ENCODE measurements at regions of chr12 and their contacts with region 1.

Region 1: DNA sequence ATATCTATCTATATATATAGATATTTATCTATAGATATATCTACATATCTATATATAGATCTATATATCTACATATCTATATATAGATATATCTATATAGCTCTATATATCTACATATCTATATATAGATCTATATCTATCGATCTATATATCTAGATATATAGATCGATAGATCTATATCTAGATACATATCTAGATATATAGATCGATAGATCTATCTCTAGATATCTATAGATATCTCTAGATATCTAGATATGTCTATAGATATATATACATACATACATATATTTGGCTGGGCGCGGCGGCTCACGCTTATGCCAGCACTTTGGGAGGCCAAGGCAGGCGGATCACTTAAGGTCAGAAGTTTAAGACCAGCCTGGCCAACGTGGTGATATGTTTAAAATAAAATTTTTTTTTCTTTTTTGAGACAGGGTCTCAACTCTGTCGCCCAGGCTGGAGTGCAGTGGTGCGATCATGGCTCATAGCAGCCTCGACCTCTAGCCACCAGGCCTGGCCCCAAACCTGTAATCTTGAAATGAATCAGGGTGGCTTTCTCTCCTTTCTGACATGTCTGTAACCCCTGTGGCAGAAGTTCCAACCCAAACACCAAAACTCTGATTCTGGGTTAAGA is 18.1 kb downstream of the ARPC3 start:
- DNase-seq: no peak
- H3K4me3 ChIP-seq: no peak overlapping the region; the same call in 1 of the 2 replicates
- H3K27ac ChIP-seq: no peak overlapping the region
- H3K4me1 ChIP-seq: no peaks in the 10 kb centered on the region; the same call in 1 of the 2 replicates
- H3K27me3 ChIP-seq: no peaks in the 10 kb centered on the region
- CTCF ChIP-seq: no peak

Region 2: DNA sequence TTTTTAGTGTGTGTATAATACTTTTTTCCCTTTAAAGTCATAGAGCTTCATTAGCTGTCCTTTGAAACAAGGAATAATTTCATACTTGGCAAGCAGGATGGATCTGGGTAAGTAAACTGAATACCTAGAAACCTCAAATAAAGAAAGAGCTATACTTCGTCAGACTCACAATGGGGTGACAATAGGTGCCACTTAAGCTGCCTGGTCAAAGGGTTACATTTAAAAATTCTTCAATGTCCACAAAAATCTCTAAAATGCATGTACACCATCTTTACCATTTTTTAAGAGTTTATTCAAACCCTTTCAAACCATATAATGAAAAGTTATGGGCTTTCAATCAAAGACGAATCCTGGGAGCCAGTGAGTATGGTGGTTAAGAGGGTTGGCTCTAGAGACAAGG is 439.0 kb before region 1 on chr12:
- CTCF ChIA-PET with region 1: interaction called, 14 read pairs
- POLR2A ChIA-PET with region 1: no interaction called
- intact Hi-C with region 1: no loop called
- DNase-seq: no peak
- H3K4me3 ChIP-seq: no peak overlapping the region
- H3K27ac ChIP-seq: no peak overlapping the region
- H3K4me1 ChIP-seq: peaks cover 14% of the 10 kb centered on the region
- H3K27me3 ChIP-seq: no peaks in the 10 kb centered on the region
- CTCF ChIP-seq: no peak

Region 3: GRCh38 chr12:110114528-110114937 is 317.5 kb before region 1 on chr12:
- CTCF ChIA-PET with region 1: interaction called, 6 read pairs
- POLR2A ChIA-PET with region 1: interaction called, 18 read pairs
- intact Hi-C with region 1: no loop called
- DNase-seq: no peak
- H3K4me3 ChIP-seq: no peak overlapping the region
- H3K27ac ChIP-seq: no peak overlapping the region
- H3K4me1 ChIP-seq: no peaks in the 10 kb centered on the region
- H3K27me3 ChIP-seq: no peaks in the 10 kb centered on the region
- CTCF ChIP-seq: no peak

Region 4: GRCh38 chr12:110280779-110281548 is 151.1 kb before region 1 on chr12 and contains the start of gene ATP2A2:
- CTCF ChIA-PET with region 1: no interaction called
- POLR2A ChIA-PET with region 1: interaction called, 11 read pairs
- intact Hi-C with region 1: no loop called
- DNase-seq: peak; percentile 64 to 90
- H3K4me3 ChIP-seq: peak within 1 kb of the TSS; percentile 96
- H3K27ac ChIP-seq: peak within 1 kb of the TSS; percentile 85
- H3K4me1 ChIP-seq: peaks cover 33% of the 10 kb centered on the region
- H3K27me3 ChIP-seq: no peaks in the 10 kb centered on the region
- CTCF ChIP-seq: no peak
- total RNA-seq, gene ATP2A2: 127 and 154 TPM in 2 replicates

Region 5: GRCh38 chr12:110379197-110379596 is 52.9 kb before region 1 on chr12:
- CTCF ChIA-PET with region 1: no interaction called
- POLR2A ChIA-PET with region 1: interaction called, 11 read pairs
- intact Hi-C with region 1: no loop called
- DNase-seq: no peak
- H3K4me3 ChIP-seq: no peak overlapping the region
- H3K27ac ChIP-seq: no peak overlapping the region
- H3K4me1 ChIP-seq: no peaks in the 10 kb centered on the region
- H3K27me3 ChIP-seq: no peaks in the 10 kb centered on the region
- CTCF ChIP-seq: no peak

Region 6: DNA sequence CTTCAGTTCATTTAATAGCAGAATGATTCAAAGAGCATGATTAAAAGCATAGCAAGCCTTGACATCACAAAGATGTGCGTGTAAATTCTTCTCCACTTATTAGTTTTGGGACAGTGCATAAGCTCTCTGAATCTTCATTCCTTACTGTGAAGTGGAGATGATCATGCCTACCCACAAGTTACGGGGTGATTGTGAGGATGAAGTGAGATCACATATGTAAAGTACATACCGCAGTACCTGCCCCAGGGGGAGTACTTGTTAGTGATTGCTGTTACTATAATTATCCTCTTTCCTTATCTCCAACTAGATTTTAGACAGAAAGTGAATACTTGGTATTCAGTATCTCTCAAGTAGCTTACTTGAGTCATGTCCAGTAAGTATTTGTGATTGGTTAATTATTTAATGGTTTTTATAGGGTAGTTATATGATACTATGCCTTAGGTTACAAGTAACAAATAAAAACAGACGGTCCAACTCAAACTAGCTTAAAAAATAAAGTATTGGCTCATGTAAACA is 76.1 kb after region 1 on chr12:
- CTCF ChIA-PET with region 1: no interaction called
- POLR2A ChIA-PET with region 1: no interaction called
- intact Hi-C with region 1: no loop called
- DNase-seq: no peak
- H3K4me3 ChIP-seq: no peak overlapping the region
- H3K27ac ChIP-seq: no peak overlapping the region
- H3K4me1 ChIP-seq: no peaks in the 10 kb centered on the region
- H3K27me3 ChIP-seq: no peaks in the 10 kb centered on the region
- CTCF ChIP-seq: no peak

Region 7: GRCh38 chr12:110600254-110600653 is 168.2 kb after region 1 on chr12:
- CTCF ChIA-PET with region 1: interaction called, 10 read pairs
- POLR2A ChIA-PET with region 1: no interaction called
- intact Hi-C with region 1: no loop called
- DNase-seq: peak in 1 of 2 experiments; percentile 58
- H3K4me3 ChIP-seq: no peak overlapping the region
- H3K27ac ChIP-seq: no peak overlapping the region
- H3K4me1 ChIP-seq: no peaks in the 10 kb centered on the region
- H3K27me3 ChIP-seq: no peaks in the 10 kb centered on the region
- CTCF ChIP-seq: peak; percentile 85

Region 8: GRCh38 chr12:110704748-110705147 is 272.7 kb after region 1 on chr12:
- CTCF ChIA-PET with region 1: interaction called, 10 read pairs
- POLR2A ChIA-PET with region 1: no interaction called
- intact Hi-C with region 1: no loop called
- DNase-seq: no peak
- H3K4me3 ChIP-seq: no peak overlapping the region
- H3K27ac ChIP-seq: no peak overlapping the region
- H3K4me1 ChIP-seq: no peaks in the 10 kb centered on the region
- H3K27me3 ChIP-seq: no peaks in the 10 kb centered on the region
- CTCF ChIP-seq: peak; percentile 58; the same call in 1 of the 2 replicates

Region 9: GRCh38 chr12:110742718-110743570 is 310.9 kb after region 1 on chr12 and contains the start of gene PPP1CC:
- CTCF ChIA-PET with region 1: no interaction called
- POLR2A ChIA-PET with region 1: no interaction called
- intact Hi-C with region 1: no loop called
- DNase-seq: peak; percentile 84 to 89
- H3K4me3 ChIP-seq: peak within 1 kb of the TSS; percentile 66
- H3K27ac ChIP-seq: peak within 1 kb of the TSS; percentile 70
- H3K4me1 ChIP-seq: peaks cover 48% of the 10 kb centered on the region
- H3K27me3 ChIP-seq: no peaks in the 10 kb centered on the region
- CTCF ChIP-seq: no peak
- total RNA-seq, gene PPP1CC: 149 and 170 TPM in 2 replicates

Measured in PC-9 (cell line).